ENCODE measurements at regions of chr19 and their contacts with region 1.

Region 1: GRCh38 chr19:43595999-43596841 is at the starts of genes IRGQ and ZNF576:
- DNase-seq: peak; percentile 100
- ATAC-seq: peak; percentile 97
- total RNA-seq, gene IRGQ: 22.2 TPM
- total RNA-seq, gene ZNF576: 14.3 TPM

Region 2: DNA sequence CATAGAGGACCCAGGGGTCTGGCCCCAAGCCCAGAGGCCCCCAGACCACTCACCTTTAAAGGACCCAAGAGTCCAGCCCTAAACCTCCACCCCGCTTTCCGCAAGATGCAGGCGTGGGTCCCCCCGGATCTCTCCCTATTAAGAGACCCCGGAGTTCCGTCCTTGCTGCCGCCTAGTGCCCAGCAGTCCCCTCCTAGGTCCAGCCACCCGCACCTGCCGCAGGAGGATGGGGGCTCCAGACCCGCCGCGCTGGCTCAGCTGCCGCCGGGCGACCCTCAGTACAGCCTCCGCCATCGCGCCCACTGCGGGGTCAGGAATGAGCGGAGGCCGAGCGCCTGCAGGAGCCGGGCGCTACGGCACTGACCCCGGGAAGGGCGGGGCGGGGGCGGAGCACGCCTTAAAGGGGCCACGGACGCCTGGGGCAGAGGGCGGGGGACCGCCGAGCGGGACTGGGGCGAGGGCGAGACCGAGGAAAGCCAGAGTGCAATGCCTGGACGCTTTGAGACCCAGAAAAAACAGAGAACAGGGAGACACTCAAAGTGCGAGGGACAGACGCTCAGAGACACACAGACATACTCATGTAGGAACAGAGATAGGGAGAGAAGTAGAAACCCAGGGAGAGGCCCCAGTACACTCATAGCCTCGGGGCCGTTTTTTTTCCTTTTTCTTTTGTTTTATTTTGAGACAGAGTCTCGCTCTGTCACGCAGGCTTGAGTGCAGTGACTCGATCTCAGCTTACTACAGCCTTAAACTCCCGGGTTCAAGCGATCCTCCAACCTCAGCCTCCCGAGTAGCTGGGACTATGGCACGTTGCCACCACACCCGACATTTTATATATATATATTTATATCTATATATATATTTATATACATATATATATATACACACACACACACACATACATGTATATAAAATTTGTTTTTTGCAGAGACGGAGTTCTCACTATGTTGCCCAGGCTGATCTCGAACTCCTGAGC is 69.0 kb before region 1 on chr19 and contains the start of gene ETHE1:
- intact Hi-C with region 1: no loop called
- DNase-seq: peak; percentile 90
- ATAC-seq: peak; percentile 92
- total RNA-seq, gene ETHE1: 33.3 TPM

Region 3: GRCh38 chr19:43651758-43652545 is 55.7 kb after region 1 on chr19:
- intact Hi-C with region 1: loop called (anchors 10 kb)
- DNase-seq: peak; percentile 76
- ATAC-seq: peak; percentile 79

Measured in sciatic nerve (tissue), 2 donors.